ENCODE measurements at regions of chr20 and their contacts with region 1.

Region 1: DNA sequence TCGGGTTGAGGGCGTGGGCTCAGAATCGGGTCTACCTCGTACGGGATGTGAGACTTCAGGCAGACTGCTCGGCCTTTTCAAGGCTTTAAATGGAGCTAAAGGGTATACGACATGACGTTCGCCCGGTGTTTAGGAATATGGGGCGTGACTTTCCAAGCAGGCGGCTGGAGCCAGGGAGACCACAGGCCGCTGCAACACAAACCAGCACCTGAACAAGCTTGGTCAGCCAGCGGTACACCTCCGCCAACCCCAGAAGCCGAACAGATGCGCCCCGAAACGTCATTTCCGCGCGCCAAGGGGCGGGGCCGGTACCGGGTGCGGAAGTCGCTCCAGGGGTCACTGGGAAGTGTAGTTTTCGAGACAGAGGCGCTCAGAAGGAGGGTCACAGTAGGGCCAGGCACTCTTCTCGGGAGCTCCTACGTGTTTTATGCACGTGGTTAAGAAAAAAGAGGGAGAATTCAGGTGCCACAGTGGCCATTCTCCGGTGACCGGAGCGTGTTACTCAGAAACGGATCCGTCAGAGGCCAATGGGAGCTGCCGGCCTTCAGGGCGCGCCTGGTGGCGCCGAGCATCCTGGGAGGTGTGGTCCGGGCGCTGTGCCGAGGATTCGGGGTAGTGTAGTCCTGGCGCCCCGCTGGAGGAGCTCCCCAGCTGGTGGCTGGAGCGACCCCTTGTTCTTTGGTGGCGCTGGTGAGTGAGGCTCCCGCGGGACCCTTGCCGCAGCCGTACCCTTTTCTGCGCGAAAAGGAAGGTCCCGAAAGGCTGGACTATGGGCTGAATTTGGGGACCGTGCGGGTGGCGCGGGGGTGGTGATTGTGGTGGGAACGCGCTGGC is at the start of gene ZNF133:
- DNase-seq: peak; percentile 84 to 98
- H3K4me3 ChIP-seq: peak within 1 kb of the TSS; percentile 77 to 87
- H3K27ac ChIP-seq: peak within 1 kb of the TSS; percentile 90 to 96
- H3K4me1 ChIP-seq: peaks cover 0 to 7% of the 10 kb centered on the region in 2 donors
- H3K27me3 ChIP-seq: no peaks in the 10 kb centered on the region
- CTCF ChIP-seq: no peak
- total RNA-seq, gene ZNF133: 0.85 TPM

Region 2: GRCh38 chr20:16573001-16573965 is 1714.8 kb before region 1 on chr20 and contains the start of gene KIF16B:
- intact Hi-C with region 1: loop called (anchors 2 kb)
- DNase-seq: peak; percentile 46 to 96
- H3K4me3 ChIP-seq: peak within 1 kb of the TSS; percentile 74 to 90
- H3K27ac ChIP-seq: peak within 1 kb of the TSS; percentile 74 to 75
- H3K4me1 ChIP-seq: peaks cover 0 to 4% of the 10 kb centered on the region in 2 donors
- H3K27me3 ChIP-seq: no peaks in the 10 kb centered on the region
- CTCF ChIP-seq: peak in 2 of 3 experiments; percentile 4 to 31
- total RNA-seq, gene KIF16B: 6.3 TPM

Region 3: DNA sequence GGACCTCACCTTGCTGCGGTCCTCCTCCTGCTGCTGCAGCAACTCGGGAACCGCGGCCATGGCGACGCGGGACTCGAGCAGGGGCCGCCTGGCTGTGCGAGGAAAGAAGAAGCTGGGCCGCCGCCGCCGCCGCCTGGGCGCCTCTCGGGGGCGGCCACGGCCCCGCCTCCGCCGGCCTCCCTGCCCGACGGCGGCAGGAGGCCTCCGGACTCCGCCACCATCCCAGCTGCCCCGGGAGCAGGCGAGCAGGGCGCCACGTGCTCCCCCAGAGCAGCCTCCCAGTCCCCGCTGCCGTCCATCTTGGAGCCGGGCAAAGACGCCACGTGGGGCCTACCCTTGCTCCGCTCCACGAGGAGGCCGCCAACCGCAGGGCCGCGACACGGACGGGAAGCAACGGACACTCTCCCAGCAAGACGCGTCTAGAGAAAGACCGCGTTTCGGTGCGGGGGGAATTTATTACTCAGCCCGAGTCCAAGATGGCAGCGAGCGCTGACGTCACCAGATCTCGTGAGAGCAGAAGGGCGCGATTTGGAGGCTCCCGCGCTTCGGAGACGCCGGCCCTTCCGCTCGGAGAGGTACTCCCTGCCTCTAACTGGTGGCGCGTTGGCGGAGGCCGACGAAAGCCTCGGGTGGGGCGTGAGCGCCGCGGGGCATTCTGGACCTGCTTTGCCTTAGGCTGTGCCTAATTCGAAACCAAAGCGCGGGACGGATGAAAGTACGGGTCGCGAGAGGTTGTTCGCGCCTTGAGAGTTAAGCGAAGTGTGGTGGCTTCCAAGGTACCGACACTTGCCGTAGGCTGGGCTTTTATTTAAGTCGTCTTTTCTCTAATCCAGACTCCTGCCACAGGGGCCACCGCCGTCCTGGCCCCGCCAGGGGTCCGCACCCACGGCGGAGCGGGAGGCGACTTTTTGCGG is 319.5 kb before region 1 on chr20 and contains the starts of genes MGME1 and SNX5:
- intact Hi-C with region 1: loop called (anchors 5 kb)
- DNase-seq: peak; percentile 99 to 100
- H3K4me3 ChIP-seq: peak within 1 kb of the TSS; percentile 79 to 84
- H3K27ac ChIP-seq: peak within 1 kb of the TSS; percentile 94 to 96
- H3K4me1 ChIP-seq: peaks cover 4 to 31% of the 10 kb centered on the region in 2 donors
- H3K27me3 ChIP-seq: no peaks in the 10 kb centered on the region
- CTCF ChIP-seq: no peak
- total RNA-seq, gene MGME1: 0.85 TPM
- total RNA-seq, gene SNX5: 32.7 TPM

Region 4: GRCh38 chr20:18466894-18467730 is 179.0 kb after region 1 on chr20 and contains the starts of genes DZANK1 and POLR3F:
- intact Hi-C with region 1: loop called (anchors 1 kb)
- DNase-seq: peak; percentile 83 to 97
- H3K4me3 ChIP-seq: peak within 1 kb of the TSS; percentile 67 to 89
- H3K27ac ChIP-seq: peak within 1 kb of the TSS; percentile 81 to 90
- H3K4me1 ChIP-seq: peaks cover 0 to 7% of the 10 kb centered on the region in 2 donors
- H3K27me3 ChIP-seq: no peaks in the 10 kb centered on the region
- CTCF ChIP-seq: no peak
- total RNA-seq, gene DZANK1: 1.3 TPM
- total RNA-seq, gene POLR3F: 14.0 TPM

Region 5: GRCh38 chr20:18537651-18538050 is 249.5 kb after region 1 on chr20:
- intact Hi-C with region 1: no loop called
- DNase-seq: no peak
- H3K4me3 ChIP-seq: no peak overlapping the region
- H3K27ac ChIP-seq: no peak overlapping the region
- H3K4me1 ChIP-seq: no peaks in the 10 kb centered on the region
- H3K27me3 ChIP-seq: no peaks in the 10 kb centered on the region
- CTCF ChIP-seq: no peak

Region 6: DNA sequence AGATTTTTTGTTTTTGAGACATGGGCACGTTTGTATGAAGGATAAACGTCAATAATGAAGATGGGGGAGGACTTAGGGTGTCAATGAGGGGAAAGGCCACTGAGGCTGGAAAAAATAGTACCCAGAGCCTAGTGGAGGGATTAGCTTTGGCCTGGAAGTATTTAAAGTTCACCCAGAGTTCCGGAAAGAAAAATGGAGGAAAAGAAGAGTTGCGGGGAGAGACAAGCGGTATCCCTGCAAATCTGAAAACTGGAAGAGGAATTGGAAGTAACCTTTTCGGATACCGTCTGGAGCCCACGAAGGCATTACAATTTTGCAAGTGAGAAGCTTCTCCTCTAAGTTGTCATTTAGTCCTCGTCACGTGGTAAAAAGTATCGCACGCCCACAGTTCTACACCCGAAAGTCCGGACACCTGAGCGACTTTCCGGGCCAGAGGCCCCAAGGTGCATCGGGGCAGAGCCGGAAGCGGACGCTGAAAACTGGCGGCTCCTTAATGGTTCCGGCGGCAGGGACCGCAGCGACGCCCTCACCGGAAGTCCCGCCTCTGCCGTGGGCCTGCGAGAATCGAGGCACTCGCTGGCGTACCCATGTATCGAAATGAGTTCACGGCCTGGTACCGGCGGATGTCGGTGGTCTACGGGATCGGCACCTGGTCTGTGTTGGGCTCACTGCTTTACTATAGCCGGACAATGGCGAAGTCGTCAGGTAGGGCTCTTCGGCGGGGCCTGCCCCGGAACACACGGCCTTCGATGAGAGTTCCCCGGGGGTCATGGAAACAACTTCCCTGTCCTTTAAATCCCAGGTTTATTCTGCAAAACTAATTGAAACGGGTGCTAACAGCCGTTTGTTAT is 279.0 kb after region 1 on chr20 and contains the start of gene SMIM26:
- intact Hi-C with region 1: loop called (anchors 1 kb)
- DNase-seq: peak; percentile 43 to 96
- H3K4me3 ChIP-seq: peak within 1 kb of the TSS; percentile 73 to 86
- H3K27ac ChIP-seq: peak within 1 kb of the TSS; percentile 80 to 93
- H3K4me1 ChIP-seq: peaks cover 0 to 10% of the 10 kb centered on the region in 2 donors
- H3K27me3 ChIP-seq: no peaks in the 10 kb centered on the region
- CTCF ChIP-seq: no peak
- total RNA-seq, gene SMIM26: 67.7 TPM

Region 7: DNA sequence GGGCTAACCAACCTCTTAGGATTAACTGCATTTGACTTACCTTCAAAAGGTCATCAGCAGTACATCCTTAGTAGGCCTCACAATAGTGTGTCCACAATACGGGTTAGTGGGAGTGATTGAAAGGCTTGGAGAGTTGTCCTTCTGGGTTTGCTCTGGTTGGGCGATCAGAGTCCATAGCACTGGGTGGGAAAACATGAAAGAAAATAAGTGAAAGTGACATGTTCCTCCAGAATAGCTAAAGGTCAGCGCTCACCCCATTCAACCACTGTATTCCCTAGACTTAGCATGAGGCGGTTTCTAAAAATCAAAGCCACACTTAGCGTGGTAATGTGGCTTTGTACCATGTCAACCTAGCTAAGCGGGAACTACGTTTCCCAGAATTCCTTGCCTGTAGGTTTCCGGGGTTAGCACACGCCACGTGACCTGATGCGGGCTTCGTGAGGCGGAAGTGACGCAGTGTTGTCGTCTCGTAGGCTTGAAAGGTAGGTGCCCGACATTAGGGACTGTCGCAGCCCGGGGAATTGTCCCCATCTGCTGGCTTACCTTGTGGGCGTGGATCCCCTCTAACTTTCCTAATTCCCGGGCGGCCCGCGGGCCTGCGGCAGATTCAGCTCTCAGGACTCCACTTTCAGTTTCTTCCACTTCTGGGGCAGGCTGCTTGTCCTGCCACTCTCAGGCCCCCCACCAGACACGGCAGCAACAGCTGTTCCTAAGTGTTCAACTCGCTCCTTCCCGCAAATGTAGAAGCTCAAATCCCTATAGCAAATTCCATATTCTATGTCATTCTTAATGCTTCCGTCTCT is 505.7 kb after region 1 on chr20:
- intact Hi-C with region 1: loop called (anchors 2 kb)
- DNase-seq: peak; percentile 71 to 94
- H3K4me3 ChIP-seq: peak overlapping the region; percentile 63 to 79
- H3K27ac ChIP-seq: peak overlapping the region; percentile 78 to 80
- H3K4me1 ChIP-seq: peaks cover 0 to 3% of the 10 kb centered on the region in 2 donors
- H3K27me3 ChIP-seq: no peaks in the 10 kb centered on the region
- CTCF ChIP-seq: peak in 1 of 3 experiments; percentile 17

Measured in ascending aorta (tissue), 2 donors.